AG04449 (cell line): ENCODE measurements at regions of chr22 and their contacts with region 1.

Region 1: GRCh38 chr22:36065775-36066559 is 37.3 kb upstream of the RBFOX2 start:
- DNase-seq: peak; percentile 73
- H3K4me3 ChIP-seq: peak overlapping the region; percentile 62
- CTCF ChIP-seq: peak; percentile 84

Region 2: GRCh38 chr22:35879351-35879750 is 186.6 kb before region 1 on chr22:
- CTCF ChIA-PET with region 1: interaction called, 11 read pairs
- POLR2A ChIA-PET with region 1: no interaction called
- DNase-seq: no peak
- H3K4me3 ChIP-seq: no peak overlapping the region
- CTCF ChIP-seq: no peak

Region 3: GRCh38 chr22:35930933-35931332 is 135.0 kb before region 1 on chr22:
- CTCF ChIA-PET with region 1: interaction called, 219 read pairs
- POLR2A ChIA-PET with region 1: interaction called, 3 read pairs
- DNase-seq: no peak
- H3K4me3 ChIP-seq: no peak overlapping the region
- CTCF ChIP-seq: peak; percentile 55

Region 4: DNA sequence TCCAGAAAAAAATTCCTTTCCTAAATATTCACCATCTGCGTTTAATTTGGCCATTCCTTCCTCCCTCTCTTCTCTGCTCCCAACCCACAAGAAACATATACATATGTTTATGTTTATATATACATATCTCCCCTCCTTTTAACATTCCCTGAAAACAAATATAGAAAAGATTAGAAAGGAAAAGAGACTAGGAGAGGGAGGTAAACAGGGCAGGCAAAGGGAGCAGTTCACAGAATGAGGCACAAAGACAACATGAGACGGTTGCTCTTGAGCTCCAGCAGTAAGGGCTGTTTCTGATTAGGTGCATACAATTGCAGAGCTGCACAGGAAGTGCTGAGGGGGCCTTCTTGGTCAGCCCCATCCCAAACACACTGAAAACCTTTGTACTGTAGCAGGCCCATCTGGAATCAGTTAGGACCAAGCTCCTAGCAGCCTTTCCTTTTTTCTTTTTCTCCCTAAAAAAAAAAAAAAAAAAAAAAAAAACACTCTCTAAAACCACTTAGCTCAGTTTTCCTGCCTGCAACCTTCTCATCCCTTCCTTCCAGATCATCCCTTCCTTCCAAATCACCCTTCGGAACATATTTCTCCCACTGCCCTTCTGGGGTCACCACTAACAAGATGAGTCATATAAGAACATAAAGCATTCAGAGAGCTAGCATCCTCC is 94.4 kb before region 1 on chr22:
- CTCF ChIA-PET with region 1: interaction called, 73 read pairs
- POLR2A ChIA-PET with region 1: interaction called, 3 read pairs
- DNase-seq: peak; percentile 68
- H3K4me3 ChIP-seq: no peak overlapping the region
- CTCF ChIP-seq: no peak

Region 5: DNA sequence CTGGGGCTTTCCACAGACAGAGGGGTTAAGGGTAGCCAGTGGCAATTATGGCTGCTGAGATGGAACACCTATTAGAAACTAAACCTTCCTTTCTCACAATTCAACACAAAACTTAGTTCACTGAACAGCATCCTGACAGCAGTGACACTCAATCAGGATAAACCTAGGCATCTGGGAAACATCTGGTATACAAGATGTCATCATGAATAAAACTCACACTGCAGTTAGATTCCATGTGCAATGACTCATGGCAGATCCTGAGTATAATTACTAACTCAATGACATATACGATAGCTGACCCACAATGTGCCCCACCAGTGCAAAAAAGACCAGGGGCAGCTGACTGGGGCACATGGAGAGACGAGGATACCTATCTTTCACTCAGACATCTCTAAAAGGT is 55.1 kb before region 1 on chr22:
- CTCF ChIA-PET with region 1: interaction called, 56 read pairs
- POLR2A ChIA-PET with region 1: no interaction called
- DNase-seq: no peak
- H3K4me3 ChIP-seq: no peak overlapping the region
- CTCF ChIP-seq: no peak

Region 6: DNA sequence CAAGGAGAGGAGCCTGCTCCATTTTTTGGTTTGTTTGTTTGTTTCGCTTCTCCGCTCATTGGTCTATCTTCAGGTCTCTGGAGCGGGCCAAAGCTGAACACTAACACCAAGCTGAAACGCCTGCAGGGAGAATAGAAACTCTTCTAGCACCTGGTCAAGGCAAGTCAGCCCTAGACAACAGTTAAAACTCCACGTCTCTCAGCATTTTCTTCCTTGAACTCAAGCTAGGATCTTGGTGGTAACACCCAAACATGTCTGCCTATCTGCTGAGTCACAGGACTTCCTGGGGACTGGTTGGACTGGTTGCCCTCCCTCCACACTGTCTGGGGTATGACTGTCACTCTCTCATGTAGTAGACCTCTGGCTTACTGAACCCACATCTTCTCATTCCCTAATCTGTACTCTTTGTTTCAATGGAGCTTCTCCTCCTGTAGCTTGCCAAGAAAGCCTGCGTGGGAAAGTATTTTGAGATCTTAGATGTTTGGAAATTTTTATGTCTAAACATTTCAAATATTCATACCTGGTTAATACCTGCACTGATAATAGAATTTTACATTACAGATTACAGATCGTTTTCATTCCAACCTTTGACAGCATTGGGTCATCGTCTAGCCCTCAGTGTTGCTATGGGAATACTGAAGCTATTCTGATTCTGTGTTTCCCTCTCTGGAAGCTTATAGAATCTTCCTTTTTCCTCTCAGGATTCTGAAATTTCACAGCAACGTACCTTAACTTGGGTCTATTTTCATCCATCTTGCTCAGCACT is 13.3 kb before region 1 on chr22:
- CTCF ChIA-PET with region 1: interaction called, 134 read pairs
- POLR2A ChIA-PET with region 1: interaction called, 7 read pairs
- DNase-seq: no peak
- H3K4me3 ChIP-seq: no peak overlapping the region
- CTCF ChIP-seq: no peak

Region 7: GRCh38 chr22:36123673-36124630 is 58.0 kb after region 1 on chr22:
- CTCF ChIA-PET with region 1: interaction called, 61 read pairs
- POLR2A ChIA-PET with region 1: no interaction called
- DNase-seq: peak; percentile 55
- H3K4me3 ChIP-seq: no peak overlapping the region
- CTCF ChIP-seq: peak; percentile 99